CD8-positive, alpha-beta T cell (primary cell): ENCODE measurements at regions of chr11 and their contacts with region 1.

Region 1: GRCh38 chr11:85699957-85700741 is 14.2 kb upstream of the CCDC89 start:
- DNase-seq: peak in 2 of 9 experiments; percentile 20 to 57
- ATAC-seq: peak; percentile 46
- H3K4me3 ChIP-seq: no peak overlapping the region
- H3K4me3 Mint-ChIP-seq: peak overlapping the region; percentile 23
- H3K27ac ChIP-seq: peak overlapping the region in 1 of 2 experiments; percentile 67
- H3K27ac Mint-ChIP-seq: peak overlapping the region; percentile 55
- H3K4me1 ChIP-seq: peaks cover 13% of the 10 kb centered on the region
- H3K4me1 Mint-ChIP-seq: peaks cover 22% of the 10 kb centered on the region
- H3K27me3 ChIP-seq: no peaks in the 10 kb centered on the region
- H3K27me3 Mint-ChIP-seq: no peaks in the 10 kb centered on the region
- CTCF ChIP-seq: no peak

Region 2: GRCh38 chr11:85718991-85719807 is 19.1 kb after region 1 on chr11:
- CTCF ChIA-PET with region 1: no interaction called
- POLR2A ChIA-PET with region 1: no interaction called
- intact Hi-C with region 1: no loop called
- DNase-seq: no peak
- ATAC-seq: no peak
- H3K4me3 ChIP-seq: no peak overlapping the region
- H3K4me3 Mint-ChIP-seq: no peak overlapping the region
- H3K27ac ChIP-seq: no peak overlapping the region
- H3K27ac Mint-ChIP-seq: no peak overlapping the region
- H3K4me1 ChIP-seq: no peaks in the 10 kb centered on the region
- H3K4me1 Mint-ChIP-seq: peaks cover 2% of the 10 kb centered on the region
- H3K27me3 ChIP-seq: no peaks in the 10 kb centered on the region
- H3K27me3 Mint-ChIP-seq: no peaks in the 10 kb centered on the region
- CTCF ChIP-seq: no peak

Region 3: DNA sequence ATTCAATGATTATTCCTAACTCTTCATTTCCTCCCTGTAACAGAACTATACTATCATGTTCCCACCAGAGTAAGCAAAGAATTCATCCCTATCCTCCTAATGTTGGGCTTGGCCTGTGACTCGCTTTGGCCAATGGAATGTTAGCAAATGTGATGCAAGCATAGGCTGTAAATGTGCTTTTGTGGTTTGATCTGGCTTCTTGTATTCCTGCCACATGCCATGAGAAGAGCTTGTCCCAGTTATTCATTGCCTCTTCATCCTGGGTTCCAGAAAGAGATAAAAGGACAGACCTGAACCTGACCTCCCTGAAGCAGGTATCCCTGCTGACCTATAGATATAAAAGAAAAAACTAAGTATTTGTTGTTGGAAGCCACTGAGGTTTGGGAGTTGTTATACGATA is 59.8 kb after region 1 on chr11:
- CTCF ChIA-PET with region 1: interaction called, 3 read pairs
- POLR2A ChIA-PET with region 1: no interaction called
- intact Hi-C with region 1: loop called in 1 of 2 experiments (anchors 5 kb)
- DNase-seq: no peak
- ATAC-seq: no peak
- H3K4me3 ChIP-seq: no peak overlapping the region
- H3K4me3 Mint-ChIP-seq: no peak overlapping the region
- H3K27ac ChIP-seq: peak overlapping the region in 1 of 2 experiments; percentile 5
- H3K27ac Mint-ChIP-seq: no peak overlapping the region
- H3K4me1 ChIP-seq: peaks cover 45% of the 10 kb centered on the region
- H3K4me1 Mint-ChIP-seq: peaks cover 72% of the 10 kb centered on the region
- H3K27me3 ChIP-seq: no peaks in the 10 kb centered on the region
- H3K27me3 Mint-ChIP-seq: no peaks in the 10 kb centered on the region
- CTCF ChIP-seq: no peak

Region 4: GRCh38 chr11:85826116-85826855 is 126.1 kb after region 1 on chr11:
- CTCF ChIA-PET with region 1: interaction called, 6 read pairs
- POLR2A ChIA-PET with region 1: interaction called, 3 read pairs
- intact Hi-C with region 1: loop called (anchors 2 kb)
- DNase-seq: peak in 4 of 9 experiments; percentile 17 to 46 (median 30)
- ATAC-seq: no peak
- H3K4me3 ChIP-seq: no peak overlapping the region
- H3K4me3 Mint-ChIP-seq: peak overlapping the region; percentile 12
- H3K27ac ChIP-seq: no peak overlapping the region
- H3K27ac Mint-ChIP-seq: peak overlapping the region; percentile 92
- H3K4me1 ChIP-seq: peaks cover 63% of the 10 kb centered on the region
- H3K4me1 Mint-ChIP-seq: peaks cover 66% of the 10 kb centered on the region
- H3K27me3 ChIP-seq: no peaks in the 10 kb centered on the region
- H3K27me3 Mint-ChIP-seq: no peaks in the 10 kb centered on the region
- CTCF ChIP-seq: peak; percentile 17